IMR-90 (cell line): ENCODE measurements at regions of chr1 and their contacts with region 1.

Region 1: DNA sequence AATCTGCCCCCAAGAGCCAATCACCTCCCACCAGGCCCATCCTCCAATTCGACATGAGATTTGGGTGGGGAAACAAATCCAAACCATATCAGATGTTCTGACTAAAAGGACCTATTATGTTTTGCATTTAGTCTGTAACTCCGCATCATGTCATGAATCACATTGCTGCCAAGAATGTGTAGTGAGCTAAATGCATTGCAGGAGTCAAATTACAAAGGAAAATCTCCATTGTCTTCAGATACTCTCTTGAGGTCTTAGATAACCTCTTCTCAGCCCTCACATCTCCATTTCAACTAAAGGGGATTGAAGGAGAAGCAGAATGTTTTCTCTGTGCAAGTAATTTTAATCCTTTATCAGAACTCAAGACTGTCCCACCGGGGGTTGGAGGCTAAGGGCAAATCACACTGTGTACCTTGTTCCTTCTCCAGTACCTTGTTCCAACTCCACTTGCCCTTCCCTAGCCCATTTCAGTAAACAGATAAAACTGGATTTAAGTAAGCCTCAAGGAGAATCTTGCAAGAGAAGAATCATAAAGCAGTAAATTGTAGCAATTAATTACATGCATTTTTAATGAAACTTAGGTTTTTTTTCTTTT is 34.1 kb downstream of the EXTL2 start:
- DNase-seq: peak; percentile 75
- ATAC-seq: no peak
- H3K4me3 ChIP-seq: no peak overlapping the region
- H3K27ac ChIP-seq: no peak overlapping the region
- H3K4me1 ChIP-seq: peaks cover 15% of the 10 kb centered on the region
- H3K27me3 ChIP-seq: no peaks in the 10 kb centered on the region
- CTCF ChIP-seq: no peak
- POLR2A ChIP-seq: no peak
- RAD21 ChIP-seq: no peak

Region 2: GRCh38 chr1:100178091-100178490 is 682.4 kb before region 1 on chr1 and contains the start of gene LRRC39:
- CTCF ChIA-PET with region 1: no interaction called
- POLR2A ChIA-PET with region 1: no interaction called
- dilution Hi-C with region 1: no loop called
- in situ Hi-C with region 1: no loop called
- intact Hi-C with region 1: no loop called
- DNase-seq: no peak
- ATAC-seq: no peak
- H3K4me3 ChIP-seq: no peak within 1 kb of the TSS
- H3K27ac ChIP-seq: no peak within 1 kb of the TSS
- H3K4me1 ChIP-seq: no peaks in the 10 kb centered on the region
- H3K27me3 ChIP-seq: no peaks in the 10 kb centered on the region
- CTCF ChIP-seq: no peak
- POLR2A ChIP-seq: no peak
- RAD21 ChIP-seq: no peak
- total RNA-seq, gene LRRC39: 0.36 and 0.56 TPM in 2 replicates

Region 3: DNA sequence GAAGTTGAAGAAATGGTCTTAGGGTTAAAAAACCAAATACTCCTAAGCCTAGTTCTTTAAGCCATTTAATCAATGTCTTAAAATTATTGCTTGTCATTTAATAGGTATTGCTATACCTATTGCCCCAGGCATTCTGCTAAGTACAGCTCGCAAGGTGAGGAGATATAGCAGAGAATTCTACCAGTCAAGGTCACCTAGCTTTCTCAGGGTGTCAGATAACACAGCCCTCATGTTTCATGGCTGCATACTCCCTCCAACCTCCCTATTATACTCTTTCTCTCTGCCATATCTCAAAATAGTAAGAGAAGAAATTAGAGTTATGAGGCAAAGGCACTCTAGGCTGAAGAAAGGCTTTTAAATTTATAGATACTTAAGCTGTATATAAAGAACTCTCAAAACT is 390.9 kb before region 1 on chr1:
- CTCF ChIA-PET with region 1: no interaction called
- POLR2A ChIA-PET with region 1: no interaction called
- dilution Hi-C with region 1: no loop called
- in situ Hi-C with region 1: loop called (anchors 5 kb)
- intact Hi-C with region 1: no loop called
- DNase-seq: no peak
- ATAC-seq: no peak
- H3K4me3 ChIP-seq: no peak overlapping the region
- H3K27ac ChIP-seq: no peak overlapping the region
- H3K4me1 ChIP-seq: no peaks in the 10 kb centered on the region
- H3K27me3 ChIP-seq: no peaks in the 10 kb centered on the region
- CTCF ChIP-seq: no peak
- POLR2A ChIP-seq: no peak
- RAD21 ChIP-seq: no peak

Region 4: DNA sequence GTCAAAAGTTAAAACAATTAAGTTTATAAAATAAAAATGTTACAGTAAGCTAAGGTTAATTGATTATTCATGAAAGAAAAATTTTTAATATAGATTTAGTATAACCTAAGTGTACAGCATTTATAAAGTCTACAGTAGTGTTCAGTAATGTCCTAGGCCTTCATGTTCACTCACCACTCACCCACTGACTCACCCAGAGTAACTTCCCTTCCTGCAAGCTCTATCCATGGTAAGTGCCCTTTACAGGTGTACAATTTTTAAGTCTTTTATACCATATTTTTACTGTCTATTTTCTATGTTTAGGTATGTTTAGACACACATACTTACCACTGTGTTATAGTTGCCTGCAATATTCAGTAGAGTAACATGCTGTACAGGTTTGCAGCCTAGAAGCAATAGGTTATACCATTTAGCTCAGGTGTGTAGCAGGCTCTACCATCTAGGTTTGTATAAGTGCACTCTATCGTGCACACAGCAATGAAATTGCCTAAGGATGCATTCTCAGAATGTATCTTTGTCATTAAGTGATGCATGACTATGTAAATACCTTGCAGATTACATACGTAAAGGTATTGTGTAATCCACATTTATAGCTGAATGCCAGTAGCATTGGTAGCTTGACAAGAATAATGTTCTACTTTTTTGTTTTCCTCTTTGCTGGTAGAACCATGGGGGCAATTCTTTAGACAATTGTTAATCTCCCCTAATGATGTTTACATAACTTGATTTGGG is 358.3 kb before region 1 on chr1:
- CTCF ChIA-PET with region 1: no interaction called
- POLR2A ChIA-PET with region 1: no interaction called
- dilution Hi-C with region 1: no loop called
- in situ Hi-C with region 1: no loop called
- intact Hi-C with region 1: no loop called
- DNase-seq: peak; percentile 23
- ATAC-seq: no peak
- H3K4me3 ChIP-seq: no peak overlapping the region
- H3K27ac ChIP-seq: no peak overlapping the region
- H3K4me1 ChIP-seq: peaks cover 1% of the 10 kb centered on the region; the same call in 1 of the 2 replicates
- H3K27me3 ChIP-seq: no peaks in the 10 kb centered on the region
- CTCF ChIP-seq: no peak
- POLR2A ChIP-seq: no peak
- RAD21 ChIP-seq: no peak

Region 5: DNA sequence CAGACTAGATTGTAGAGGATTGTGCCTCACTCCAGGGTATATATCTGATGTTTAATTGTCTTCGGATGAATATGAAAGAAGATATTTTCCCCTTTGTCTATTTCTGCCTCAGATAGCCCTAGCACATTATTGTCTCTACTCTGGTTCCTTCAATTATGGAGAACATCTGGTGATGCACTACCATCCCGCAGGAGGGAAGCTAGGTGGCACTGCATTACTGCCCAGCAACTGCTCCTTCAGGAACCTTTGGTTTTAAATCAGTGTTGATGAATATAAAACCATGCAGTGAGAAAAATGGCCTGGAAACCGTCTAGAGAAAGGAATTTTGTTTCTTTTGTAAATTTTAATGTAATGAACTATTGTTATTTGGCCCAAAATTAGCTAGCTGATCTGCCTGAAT is 254.1 kb before region 1 on chr1:
- CTCF ChIA-PET with region 1: interaction called, 4 read pairs
- POLR2A ChIA-PET with region 1: no interaction called
- dilution Hi-C with region 1: no loop called
- in situ Hi-C with region 1: loop called (anchors 5 kb)
- intact Hi-C with region 1: no loop called
- DNase-seq: peak; percentile 74
- ATAC-seq: peak; percentile 91
- H3K4me3 ChIP-seq: no peak overlapping the region
- H3K27ac ChIP-seq: no peak overlapping the region
- H3K4me1 ChIP-seq: peaks cover 4% of the 10 kb centered on the region; the same call in 1 of the 2 replicates
- H3K27me3 ChIP-seq: no peaks in the 10 kb centered on the region
- CTCF ChIP-seq: peak; percentile 81
- POLR2A ChIP-seq: peak; percentile 34; the same call in 1 of the 2 replicates
- RAD21 ChIP-seq: peak; percentile 89